Left ventricle myocardium inferior (tissue), 1 donor: ENCODE measurements at regions of chr6 and their contacts with region 1.

Region 1: GRCh38 chr6:87139236-87139635 is 16.1 kb upstream of the ZNF292 start:
- DNase-seq: no peak
- H3K4me3 ChIP-seq: no peak overlapping the region
- H3K27ac ChIP-seq: no peak overlapping the region
- H3K4me1 ChIP-seq: no peaks in the 10 kb centered on the region
- H3K27me3 ChIP-seq: peaks cover 13% of the 10 kb centered on the region
- CTCF ChIP-seq: peak; percentile 75

Region 2: GRCh38 chr6:87241307-87241706 is 102.1 kb after region 1 on chr6:
- intact Hi-C with region 1: loop called (anchors 5 kb)
- DNase-seq: no peak
- H3K4me3 ChIP-seq: no peak overlapping the region
- H3K27ac ChIP-seq: no peak overlapping the region
- H3K4me1 ChIP-seq: no peaks in the 10 kb centered on the region
- H3K27me3 ChIP-seq: no peaks in the 10 kb centered on the region
- CTCF ChIP-seq: no peak